Activated CD8-positive, alpha-beta T cell treated with anti-CD3 and anti-CD28 coated beads, Interleukin-2, amount 10 ng/mL, durations not matched to agents 7 days and 5 days (primary cell): ENCODE measurements at regions of chr19 and their contacts with region 1.

Region 1: DNA sequence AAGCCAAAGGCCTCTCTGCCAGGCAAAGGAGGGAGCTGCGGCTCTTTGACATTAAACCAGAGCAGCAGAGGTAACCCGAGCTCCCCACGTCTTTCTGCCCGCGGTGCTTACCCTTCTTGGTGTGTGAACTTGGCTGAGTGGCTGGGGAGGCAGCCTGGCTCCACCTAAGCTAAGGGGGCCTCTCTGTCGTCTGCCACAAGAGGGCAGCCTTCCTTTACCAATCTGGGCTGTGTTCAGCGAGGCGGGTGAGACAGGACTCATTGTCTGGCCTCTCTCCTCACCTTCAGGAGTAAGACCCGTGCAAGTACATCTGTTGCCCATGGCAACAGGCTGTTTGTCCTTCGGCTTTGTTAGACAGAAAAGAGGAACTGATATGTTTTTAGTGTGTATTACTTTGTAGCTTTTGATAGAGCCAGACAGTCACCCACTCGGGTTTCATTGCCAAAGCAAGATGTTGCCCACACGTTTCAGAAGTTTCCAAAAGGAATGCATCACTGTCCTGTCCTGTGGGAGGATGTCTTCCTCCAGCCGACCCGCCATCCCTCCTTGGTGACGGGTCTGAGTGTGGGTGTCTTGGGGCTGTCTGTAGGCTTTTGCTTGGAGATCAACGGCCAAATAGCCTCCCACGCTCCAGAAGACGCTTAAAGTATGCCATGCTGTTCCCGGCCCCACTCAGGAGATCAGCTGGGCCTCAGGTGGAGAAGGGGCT is 4.6 kb downstream of the POP4 start:
- DNase-seq: peak; percentile 92
- ATAC-seq: peak; percentile 78
- H3K4me3 Mint-ChIP-seq: no peak overlapping the region
- H3K27ac Mint-ChIP-seq: peak overlapping the region; percentile 31
- H3K4me1 Mint-ChIP-seq: peaks cover 28% of the 10 kb centered on the region
- H3K27me3 Mint-ChIP-seq: no peaks in the 10 kb centered on the region

Region 2: GRCh38 chr19:29505097-29505824 is 105.5 kb before region 1 on chr19:
- CTCF ChIA-PET with region 1: no interaction called
- POLR2A ChIA-PET with region 1: no interaction called
- DNase-seq: no peak
- ATAC-seq: no peak
- H3K4me3 Mint-ChIP-seq: no peak overlapping the region
- H3K27ac Mint-ChIP-seq: no peak overlapping the region
- H3K4me1 Mint-ChIP-seq: no peaks in the 10 kb centered on the region
- H3K27me3 Mint-ChIP-seq: no peaks in the 10 kb centered on the region

Region 3: GRCh38 chr19:29596885-29597525 is 13.7 kb before region 1 on chr19:
- CTCF ChIA-PET with region 1: interaction called, 3 read pairs
- POLR2A ChIA-PET with region 1: interaction called, 23 read pairs
- DNase-seq: no peak
- ATAC-seq: no peak
- H3K4me3 Mint-ChIP-seq: no peak overlapping the region
- H3K27ac Mint-ChIP-seq: no peak overlapping the region
- H3K4me1 Mint-ChIP-seq: no peaks in the 10 kb centered on the region
- H3K27me3 Mint-ChIP-seq: peaks cover 7% of the 10 kb centered on the region

Region 4: DNA sequence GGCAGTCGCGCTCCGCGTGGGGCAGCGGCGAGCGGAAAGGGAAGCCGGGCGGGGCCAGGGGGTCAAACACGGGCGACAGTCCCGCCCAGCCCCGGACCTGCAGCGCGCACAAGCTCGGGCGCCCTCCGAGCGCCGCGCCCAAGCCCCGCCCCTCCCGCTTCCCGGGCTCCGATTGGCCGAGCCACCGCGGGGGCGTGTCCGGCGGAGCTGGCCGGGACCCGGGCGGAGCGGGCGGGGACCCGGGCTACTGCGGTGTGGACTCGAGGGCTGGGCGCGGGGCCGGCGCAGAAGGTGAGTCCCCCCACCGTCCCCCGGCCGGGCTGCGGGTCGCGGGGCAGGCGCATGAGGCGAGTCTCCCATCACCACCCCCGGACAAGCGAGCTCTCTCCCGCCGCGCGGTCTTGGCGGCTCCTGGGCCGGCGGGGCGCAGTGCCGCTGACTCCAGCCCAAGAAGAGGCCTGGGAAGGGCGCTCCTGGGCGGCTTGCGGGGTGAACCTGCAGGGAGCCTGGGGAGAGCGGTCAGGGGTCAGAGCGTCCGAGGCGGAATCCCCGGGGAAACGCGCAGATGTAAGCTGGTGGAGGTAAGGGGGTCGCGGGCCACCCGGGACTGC is 54.6 kb after region 1 on chr19 and contains the start of gene PLEKHF1:
- CTCF ChIA-PET with region 1: interaction called, 179 read pairs
- POLR2A ChIA-PET with region 1: interaction called, 68 read pairs
- DNase-seq: peak; percentile 89
- ATAC-seq: peak; percentile 88
- H3K4me3 Mint-ChIP-seq: peak within 1 kb of the TSS; percentile 86
- H3K27ac Mint-ChIP-seq: peak within 1 kb of the TSS; percentile 90
- H3K4me1 Mint-ChIP-seq: peaks cover 68% of the 10 kb centered on the region
- H3K27me3 Mint-ChIP-seq: no peaks in the 10 kb centered on the region
- total RNA-seq, gene PLEKHF1: 46.0 to 47.7 TPM

Region 5: GRCh38 chr19:29680447-29680846 is 69.7 kb after region 1 on chr19:
- CTCF ChIA-PET with region 1: interaction called, 16 read pairs
- POLR2A ChIA-PET with region 1: interaction called, 14 read pairs
- DNase-seq: peak; percentile 91
- ATAC-seq: peak; percentile 94
- H3K4me3 Mint-ChIP-seq: peak overlapping the region; percentile 58
- H3K27ac Mint-ChIP-seq: peak overlapping the region; percentile 89
- H3K4me1 Mint-ChIP-seq: peaks cover 79% of the 10 kb centered on the region
- H3K27me3 Mint-ChIP-seq: no peaks in the 10 kb centered on the region

Region 6: DNA sequence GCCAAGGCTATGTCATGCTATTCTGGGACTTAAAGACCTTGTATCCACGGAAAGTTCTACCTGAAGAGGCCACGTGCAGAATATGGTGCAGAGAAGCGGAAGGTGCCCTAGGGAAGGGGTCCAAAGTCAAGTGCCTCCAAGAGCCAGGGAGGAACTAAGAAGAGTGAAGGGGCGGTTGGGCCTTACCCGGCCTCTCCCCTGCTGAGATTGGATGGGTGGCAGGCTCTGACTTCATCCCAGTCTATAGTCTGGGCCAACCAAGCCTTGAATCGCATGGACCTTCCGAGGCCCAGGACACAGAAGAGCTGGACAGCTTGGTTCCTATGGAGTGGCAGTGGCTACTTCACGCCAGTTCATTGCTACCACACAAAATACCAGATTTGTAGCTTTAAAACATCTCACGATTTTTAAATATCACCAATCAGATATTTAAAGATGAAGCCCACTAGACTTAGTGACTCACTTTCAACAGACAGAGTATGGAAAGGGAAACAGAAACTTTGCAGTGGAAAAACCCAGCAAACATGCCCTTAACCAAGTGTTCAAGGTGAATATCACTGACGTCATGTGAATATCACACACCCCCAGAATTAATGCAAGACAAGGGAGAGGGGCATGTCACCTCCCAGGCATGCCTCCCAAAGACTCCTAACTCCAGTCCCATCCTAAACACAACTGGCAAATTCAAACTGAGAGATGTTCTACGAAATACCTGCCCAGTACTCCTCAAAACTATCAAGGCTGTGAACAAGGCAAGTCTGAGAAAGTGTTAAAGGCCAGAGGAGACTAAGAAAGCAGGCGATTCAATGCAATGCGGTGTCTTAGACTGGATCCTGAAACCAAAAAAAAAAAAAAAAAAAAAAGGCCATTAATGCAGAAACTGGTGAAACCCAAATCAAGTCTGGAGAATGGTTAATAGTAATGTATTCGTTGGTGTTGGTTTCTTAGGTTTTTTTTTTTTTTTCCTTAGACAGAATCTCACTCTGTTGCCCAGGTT is 94.1 kb after region 1 on chr19:
- CTCF ChIA-PET with region 1: interaction called, 204 read pairs
- POLR2A ChIA-PET with region 1: interaction called, 5 read pairs
- DNase-seq: peak; percentile 40
- ATAC-seq: peak; percentile 72
- H3K4me3 Mint-ChIP-seq: peak overlapping the region; percentile 7
- H3K27ac Mint-ChIP-seq: peak overlapping the region; percentile 86
- H3K4me1 Mint-ChIP-seq: peaks cover 49% of the 10 kb centered on the region
- H3K27me3 Mint-ChIP-seq: no peaks in the 10 kb centered on the region

Region 7: GRCh38 chr19:29724102-29724641 is 113.5 kb after region 1 on chr19:
- CTCF ChIA-PET with region 1: interaction called, 11 read pairs
- POLR2A ChIA-PET with region 1: interaction called, 9 read pairs
- DNase-seq: peak; percentile 55
- ATAC-seq: peak; percentile 82
- H3K4me3 Mint-ChIP-seq: peak overlapping the region; percentile 59
- H3K27ac Mint-ChIP-seq: no peak overlapping the region
- H3K4me1 Mint-ChIP-seq: peaks cover 18% of the 10 kb centered on the region
- H3K27me3 Mint-ChIP-seq: peaks cover 26% of the 10 kb centered on the region

Region 8: DNA sequence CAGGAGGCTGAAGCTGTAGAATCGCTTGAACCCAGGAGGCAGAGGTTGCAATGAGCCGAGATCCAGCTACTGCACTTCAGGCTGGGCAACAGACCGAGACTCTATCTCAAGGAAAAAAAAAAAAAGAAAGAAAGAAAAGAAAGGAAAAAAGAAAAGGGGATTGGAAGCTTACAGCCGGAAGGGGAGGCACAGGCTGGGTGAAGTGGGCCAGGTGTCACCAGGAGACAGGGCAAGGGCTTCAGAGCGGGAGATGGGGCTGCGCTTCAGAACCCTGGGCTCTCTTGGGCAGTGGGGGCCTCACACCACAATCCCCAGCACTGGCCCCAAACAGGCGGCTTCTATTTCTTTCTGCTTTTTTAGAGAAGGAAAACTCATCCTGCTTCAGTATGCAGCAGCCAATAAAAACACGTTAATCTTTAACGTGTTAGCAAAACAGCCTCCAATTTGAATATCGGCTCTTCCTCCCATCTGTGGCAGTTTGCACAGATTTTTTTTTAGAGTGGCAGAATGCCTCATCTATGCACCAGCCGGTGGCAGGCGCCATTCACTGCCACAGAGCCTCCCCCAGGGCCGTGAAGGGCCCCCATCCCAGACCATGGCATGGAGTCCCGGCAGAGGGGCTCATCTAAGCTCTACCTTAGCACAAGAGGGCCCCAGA is 151.0 kb after region 1 on chr19:
- CTCF ChIA-PET with region 1: no interaction called
- POLR2A ChIA-PET with region 1: no interaction called
- DNase-seq: no peak
- ATAC-seq: no peak
- H3K4me3 Mint-ChIP-seq: no peak overlapping the region
- H3K27ac Mint-ChIP-seq: no peak overlapping the region
- H3K4me1 Mint-ChIP-seq: no peaks in the 10 kb centered on the region
- H3K27me3 Mint-ChIP-seq: no peaks in the 10 kb centered on the region